ENCODE measurements at regions of chr1 and their contacts with region 1.

Region 1: DNA sequence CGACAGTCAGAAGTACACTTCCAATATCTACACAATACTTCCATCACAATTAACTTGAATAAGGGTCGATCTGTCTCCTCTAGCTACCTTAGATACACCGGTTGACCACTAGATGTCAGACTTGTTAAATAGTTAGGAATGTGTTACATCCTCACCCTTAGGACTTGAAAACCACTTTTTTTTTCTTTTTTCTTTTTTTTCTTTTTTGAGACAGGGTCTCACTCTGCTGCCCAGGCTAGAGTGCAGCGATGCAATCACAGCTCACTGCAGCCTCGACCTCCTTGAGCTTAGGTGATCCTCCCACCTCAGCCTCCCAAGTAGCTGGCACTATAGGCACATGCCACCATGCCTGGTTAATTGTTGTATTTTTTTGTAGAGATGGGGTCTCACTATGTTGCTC is 120.4 kb upstream of the GREM2 start:
- DNase-seq: peak; percentile 50
- H3K4me3 ChIP-seq: no peak overlapping the region
- H3K27ac ChIP-seq: no peak overlapping the region
- H3K27me3 ChIP-seq: no peaks in the 10 kb centered on the region
- CTCF ChIP-seq: peak; percentile 75

Region 2: DNA sequence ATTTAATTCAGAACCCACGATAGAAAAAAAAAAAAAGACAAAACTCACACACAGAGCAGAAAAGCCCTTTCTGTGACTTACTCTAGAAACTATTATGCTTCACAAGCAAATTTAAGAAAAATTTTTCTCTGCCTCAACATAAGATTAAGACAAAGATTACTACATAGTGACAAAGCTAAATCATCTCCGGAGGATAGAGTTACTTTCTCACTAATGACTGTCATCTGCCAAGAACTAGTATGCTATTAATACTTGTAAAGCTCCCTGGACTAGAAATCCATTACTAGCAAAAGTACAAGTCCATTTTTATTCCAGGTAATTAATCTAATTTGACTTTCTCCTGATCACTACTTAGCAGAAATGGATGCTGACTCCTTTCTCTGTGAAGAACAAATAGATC is 146.4 kb before region 1 on chr1:
- CTCF ChIA-PET with region 1: no interaction called
- POLR2A ChIA-PET with region 1: no interaction called
- DNase-seq: no peak
- H3K4me3 ChIP-seq: no peak overlapping the region
- H3K27ac ChIP-seq: no peak overlapping the region
- H3K27me3 ChIP-seq: no peaks in the 10 kb centered on the region
- CTCF ChIP-seq: no peak

Region 3: GRCh38 chr1:240635466-240636256 is 96.7 kb before region 1 on chr1:
- CTCF ChIA-PET with region 1: no interaction called
- POLR2A ChIA-PET with region 1: no interaction called
- DNase-seq: no peak
- H3K4me3 ChIP-seq: no peak overlapping the region
- H3K27ac ChIP-seq: no peak overlapping the region
- H3K27me3 ChIP-seq: no peaks in the 10 kb centered on the region
- CTCF ChIP-seq: no peak

Region 4: DNA sequence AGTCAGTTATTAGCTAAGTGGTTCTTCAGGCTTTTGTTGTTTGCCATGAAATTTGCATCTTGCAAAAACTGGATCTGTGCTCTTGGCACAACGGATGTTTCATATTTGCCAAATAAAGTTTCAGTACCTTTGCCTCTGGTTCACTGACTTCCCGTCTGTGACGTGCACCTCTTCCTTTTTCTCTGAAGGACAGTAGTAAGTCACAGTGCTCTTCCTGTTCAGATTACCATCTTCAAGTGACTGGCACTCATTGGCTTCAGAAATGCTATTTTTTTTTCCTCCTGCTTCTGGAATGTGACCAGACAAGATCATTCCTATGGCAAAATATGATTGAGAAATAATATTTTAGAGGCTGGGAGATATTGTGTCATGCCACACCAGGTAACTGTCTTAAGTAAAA is 44.6 kb before region 1 on chr1:
- CTCF ChIA-PET with region 1: no interaction called
- POLR2A ChIA-PET with region 1: no interaction called
- DNase-seq: no peak
- H3K4me3 ChIP-seq: no peak overlapping the region
- H3K27ac ChIP-seq: no peak overlapping the region
- H3K27me3 ChIP-seq: no peaks in the 10 kb centered on the region
- CTCF ChIP-seq: no peak

Region 5: DNA sequence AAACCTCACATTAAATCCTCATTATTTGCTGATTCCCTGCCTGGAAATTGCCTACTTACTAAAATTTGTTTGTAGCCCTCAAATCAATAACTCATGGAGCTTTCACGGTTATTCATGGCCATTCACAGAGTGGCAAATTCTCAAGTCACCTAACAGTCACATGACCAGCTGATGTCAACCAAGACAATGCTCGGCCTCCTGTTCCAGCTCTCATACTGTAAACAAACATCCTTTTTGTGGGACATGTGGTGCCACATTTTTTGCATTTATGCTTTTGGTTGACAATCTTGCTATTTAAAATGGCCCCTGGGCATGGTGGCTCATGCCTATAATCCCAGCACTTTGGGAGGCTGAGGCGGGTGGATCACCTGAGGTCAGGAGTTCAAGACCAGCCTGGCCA is 151.1 kb after region 1 on chr1:
- CTCF ChIA-PET with region 1: interaction called, 15 read pairs
- POLR2A ChIA-PET with region 1: no interaction called
- DNase-seq: no peak
- H3K4me3 ChIP-seq: no peak overlapping the region
- H3K27ac ChIP-seq: no peak overlapping the region
- H3K27me3 ChIP-seq: no peaks in the 10 kb centered on the region
- CTCF ChIP-seq: no peak

Region 6: DNA sequence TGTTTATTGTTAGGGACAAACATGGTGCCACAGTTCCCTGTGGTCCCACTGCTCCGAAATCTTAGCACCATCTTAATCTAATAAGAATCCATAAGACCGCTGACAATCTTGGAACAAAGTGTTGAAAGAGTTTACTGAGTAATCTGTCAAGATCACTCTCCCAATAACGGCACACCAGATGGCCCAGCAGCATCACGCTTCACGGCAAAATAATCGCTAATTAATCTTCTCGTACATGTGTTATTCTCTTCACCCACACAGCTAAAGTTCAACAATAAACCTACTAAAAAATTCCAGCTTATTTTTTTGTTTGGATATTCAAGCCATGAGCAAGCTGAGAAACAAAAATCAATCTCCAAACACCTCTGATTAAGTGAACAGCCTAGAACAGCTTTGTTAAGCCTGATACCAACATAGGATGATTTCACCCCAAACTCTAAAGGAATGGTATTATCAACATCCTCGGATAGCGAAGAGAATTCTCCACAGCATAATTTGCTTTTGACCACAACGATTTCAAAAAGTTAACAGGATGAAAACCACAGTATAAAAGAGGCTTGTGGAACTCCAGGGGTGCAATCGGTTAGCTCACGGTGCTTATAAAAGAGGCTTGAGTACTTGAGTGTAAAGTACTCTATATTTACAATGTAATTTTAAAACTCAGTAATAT is 209.4 kb after region 1 on chr1:
- CTCF ChIA-PET with region 1: interaction called, 215 read pairs
- POLR2A ChIA-PET with region 1: no interaction called
- DNase-seq: no peak
- H3K4me3 ChIP-seq: no peak overlapping the region
- H3K27ac ChIP-seq: no peak overlapping the region
- H3K27me3 ChIP-seq: no peaks in the 10 kb centered on the region
- CTCF ChIP-seq: no peak

Region 7: DNA sequence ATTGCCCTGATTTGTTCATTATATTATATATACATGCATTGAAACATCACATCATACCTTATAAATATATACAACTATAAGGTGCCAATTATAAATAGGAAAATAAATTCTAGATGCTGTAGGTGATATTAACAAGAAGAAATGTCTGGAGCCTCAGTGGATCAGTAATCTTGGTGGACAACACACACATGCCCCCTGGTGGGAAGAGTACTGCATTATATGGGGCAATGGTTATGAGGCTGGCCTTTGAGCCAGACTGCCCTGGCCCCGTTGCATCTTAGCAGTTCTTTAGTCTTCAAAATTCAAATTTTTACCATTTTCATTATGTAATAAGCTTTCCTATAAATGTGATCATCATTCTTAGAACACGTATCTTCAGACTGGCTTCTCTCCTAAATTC is 214.5 kb after region 1 on chr1:
- CTCF ChIA-PET with region 1: interaction called, 215 read pairs
- POLR2A ChIA-PET with region 1: no interaction called
- DNase-seq: peak; percentile 32
- H3K4me3 ChIP-seq: no peak overlapping the region
- H3K27ac ChIP-seq: no peak overlapping the region
- H3K27me3 ChIP-seq: no peaks in the 10 kb centered on the region
- CTCF ChIP-seq: peak; percentile 76

Region 8: GRCh38 chr1:240967070-240967724 is 234.8 kb after region 1 on chr1:
- CTCF ChIA-PET with region 1: interaction called, 12 read pairs
- POLR2A ChIA-PET with region 1: no interaction called
- DNase-seq: no peak
- H3K4me3 ChIP-seq: no peak overlapping the region
- H3K27ac ChIP-seq: no peak overlapping the region
- H3K27me3 ChIP-seq: no peaks in the 10 kb centered on the region
- CTCF ChIP-seq: peak; percentile 28

Region 9: DNA sequence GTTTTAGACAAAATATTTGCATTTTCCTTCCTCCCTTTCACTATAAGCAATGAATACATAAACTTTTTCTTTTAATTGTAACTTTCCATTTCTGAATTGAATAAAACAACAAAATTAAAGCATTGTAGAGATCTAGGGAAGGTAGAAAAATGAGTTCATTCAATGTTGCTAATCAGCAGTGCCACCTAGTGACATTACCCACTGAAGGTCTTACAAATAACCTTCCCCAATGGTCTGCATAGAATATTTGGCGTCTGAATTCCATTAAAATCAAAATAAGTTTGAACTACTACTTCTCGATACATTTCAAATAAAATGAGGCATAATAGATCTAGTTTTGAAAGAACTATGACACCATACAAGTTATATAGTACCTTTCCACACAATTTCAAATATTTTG is 767.5 kb after region 1 on chr1:
- CTCF ChIA-PET with region 1: interaction called, 12 read pairs
- POLR2A ChIA-PET with region 1: interaction called, 9 read pairs
- DNase-seq: peak; percentile 16
- H3K4me3 ChIP-seq: no peak overlapping the region
- H3K27ac ChIP-seq: no peak overlapping the region
- H3K27me3 ChIP-seq: no peaks in the 10 kb centered on the region
- CTCF ChIP-seq: peak; percentile 61